Pancreas (tissue), 10 donors: ENCODE measurements at regions of chr17 and their contacts with region 1.

Region 1: GRCh38 chr17:7444682-7445618 is at the start of gene CHRNB1:
- DNase-seq: peak; percentile 80 to 94 (median 88)
- ATAC-seq: peak; percentile 92 to 96 (median 94)
- H3K4me3 ChIP-seq: peak within 1 kb of the TSS; percentile 18 to 63 (median 58)
- H3K27ac ChIP-seq: peak within 1 kb of the TSS; percentile 22 to 64 (median 42)
- H3K4me1 ChIP-seq: peaks cover 0 to 11% (median 0%) of the 10 kb centered on the region in 3 donors
- H3K27me3 ChIP-seq: no peaks in the 10 kb centered on the region
- CTCF ChIP-seq: no peak
- total RNA-seq, gene CHRNB1: 7.5 to 15.0 (median 8.7) TPM

Region 2: GRCh38 chr17:7296189-7296902 is 148.6 kb before region 1 on chr17:
- intact Hi-C with region 1: no loop called
- DNase-seq: peak; percentile 69 to 95 (median 85)
- ATAC-seq: peak; percentile 67 to 86 (median 82)
- H3K4me3 ChIP-seq: peak overlapping the region in 1 of 4 donors; percentile 20
- H3K27ac ChIP-seq: no peak overlapping the region
- H3K4me1 ChIP-seq: peaks cover 0 to 18% (median 13%) of the 10 kb centered on the region in 3 donors
- H3K27me3 ChIP-seq: no peaks in the 10 kb centered on the region
- CTCF ChIP-seq: peak; percentile 84 to 90 (median 88)

Region 3: DNA sequence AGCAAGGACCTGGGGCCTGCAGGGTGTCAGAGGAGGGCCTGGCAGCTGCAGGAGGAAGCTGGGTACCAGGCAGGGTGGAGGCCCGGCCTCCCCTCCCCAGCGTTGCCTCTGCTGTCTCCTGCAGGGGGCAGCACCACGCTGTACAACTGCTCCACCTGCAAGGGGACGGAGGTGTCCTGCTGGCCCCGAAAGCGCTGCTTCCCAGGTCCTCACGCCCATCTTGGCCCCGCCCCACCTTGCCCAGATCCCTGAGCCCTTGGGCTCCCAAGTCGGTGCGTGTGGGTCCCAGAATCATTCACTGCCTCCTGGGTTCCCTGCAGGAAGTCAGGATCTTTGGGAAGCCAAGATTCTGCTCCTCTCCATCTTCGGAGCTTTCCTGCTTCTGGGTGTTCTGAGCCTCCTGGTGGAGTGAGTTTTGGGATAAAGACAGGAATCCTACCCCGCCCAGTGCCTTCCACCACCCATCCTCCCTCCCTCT is 88.8 kb before region 1 on chr17:
- intact Hi-C with region 1: no loop called
- DNase-seq: peak; percentile 75 to 93 (median 88)
- ATAC-seq: peak; percentile 21 to 61 (median 54)
- H3K4me3 ChIP-seq: no peak overlapping the region
- H3K27ac ChIP-seq: no peak overlapping the region
- H3K4me1 ChIP-seq: peaks cover 0 to 12% (median 8%) of the 10 kb centered on the region in 3 donors
- H3K27me3 ChIP-seq: no peaks in the 10 kb centered on the region
- CTCF ChIP-seq: peak; percentile 62 to 88 (median 80)

Region 4: DNA sequence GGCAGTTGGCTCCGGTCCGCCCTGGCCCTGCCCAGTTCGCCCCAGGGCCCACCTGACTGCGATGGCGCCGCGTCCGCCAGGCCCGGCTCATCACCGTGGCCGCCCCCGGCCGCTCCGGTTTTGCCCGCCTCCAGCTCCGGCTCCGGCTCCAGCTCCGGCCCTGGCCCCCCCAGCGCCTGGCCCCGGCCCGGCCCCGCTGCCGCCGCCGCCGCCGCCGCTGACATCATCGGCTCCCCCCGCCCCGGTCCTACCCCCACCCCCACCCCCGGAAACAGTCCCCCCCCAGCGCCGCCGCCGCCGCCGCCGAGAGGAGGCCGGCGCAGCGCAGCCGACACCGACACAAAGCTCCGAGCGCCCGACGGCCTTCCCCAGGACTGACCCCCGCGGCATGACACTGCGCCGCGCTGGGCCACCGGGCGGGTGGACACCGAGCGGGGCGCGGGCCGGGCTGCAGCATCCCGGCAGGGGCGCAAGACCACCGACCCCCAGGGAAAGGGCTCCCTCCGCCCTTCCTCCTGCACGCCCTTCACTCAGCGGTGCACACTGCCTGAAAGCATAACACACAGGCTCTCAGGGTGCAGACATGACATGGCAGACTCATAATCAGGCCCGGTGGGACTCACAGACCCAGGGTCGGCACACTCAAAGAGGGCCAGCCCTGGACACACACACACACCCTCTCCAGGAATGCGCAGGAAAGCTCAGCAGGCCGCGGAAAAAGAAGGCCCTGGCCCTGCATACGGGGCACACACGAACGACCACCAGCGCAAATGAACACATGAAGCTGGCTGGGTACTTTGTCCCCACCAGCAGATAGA is 34.7 kb after region 1 on chr17 and contains the start of gene ZBTB4:
- intact Hi-C with region 1: loop called in 2 of 3 experiments (anchors 5 kb)
- DNase-seq: peak in 5 of 6 donors; percentile 51 to 86 (median 80)
- ATAC-seq: peak in 3 of 4 donors; percentile 2 to 25 (median 16)
- H3K4me3 ChIP-seq: peak within 1 kb of the TSS; percentile 89 to 98 (median 98)
- H3K27ac ChIP-seq: peak within 1 kb of the TSS; percentile 98 to 99 (median 98)
- H3K4me1 ChIP-seq: peaks cover 0 to 17% (median 16%) of the 10 kb centered on the region in 3 donors
- H3K27me3 ChIP-seq: no peaks in the 10 kb centered on the region
- CTCF ChIP-seq: no peak
- total RNA-seq, gene ZBTB4: 20.3 to 30.2 (median 22.2) TPM

Region 5: DNA sequence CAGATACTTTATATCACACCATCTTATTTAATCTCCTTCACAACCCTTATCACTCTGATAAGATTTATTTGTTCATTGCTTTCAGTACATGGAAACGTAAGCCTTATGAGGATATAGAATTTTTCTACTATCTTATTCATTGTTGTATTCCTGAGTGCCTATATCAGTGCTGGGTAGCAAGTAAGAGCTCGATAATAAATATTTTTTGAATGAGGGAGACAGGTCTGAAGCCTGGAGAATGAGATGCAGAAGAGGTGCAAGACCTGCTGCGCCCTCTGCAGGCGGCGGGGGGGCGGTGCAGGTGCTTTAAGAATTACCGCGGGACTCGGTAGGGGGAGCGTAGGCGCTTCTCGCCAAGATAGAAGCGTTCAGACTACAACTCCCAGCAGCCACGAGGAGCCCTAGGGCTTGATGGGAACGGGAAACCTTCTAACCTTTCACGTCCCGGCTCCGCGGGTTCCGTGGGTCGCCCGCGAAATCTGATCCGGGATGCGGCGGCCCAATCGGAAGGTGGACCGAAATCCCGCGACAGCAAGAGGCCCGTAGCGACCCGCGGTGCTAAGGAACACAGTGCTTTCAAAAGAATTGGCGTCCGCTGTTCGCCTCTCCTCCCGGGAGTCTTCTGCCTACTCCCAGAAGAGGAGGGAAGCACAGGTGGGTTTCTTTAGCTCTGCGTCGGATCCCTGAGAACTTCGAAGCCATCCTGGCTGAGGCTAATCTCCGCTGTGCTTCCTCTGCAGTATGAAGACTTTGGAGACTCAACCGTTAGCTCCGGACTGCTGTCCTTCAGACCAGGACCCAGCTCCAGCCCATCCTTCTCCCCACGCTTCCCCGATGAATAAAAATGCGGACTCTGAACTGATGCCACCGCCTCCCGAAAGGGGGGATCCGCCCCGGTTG is 243.2 kb after region 1 on chr17 and contains the start of gene WRAP53:
- intact Hi-C with region 1: no loop called
- DNase-seq: peak; percentile 95 to 98 (median 97)
- ATAC-seq: peak; percentile 82 to 89 (median 86)
- H3K4me3 ChIP-seq: peak within 1 kb of the TSS; percentile 45 to 91 (median 64)
- H3K27ac ChIP-seq: peak within 1 kb of the TSS; percentile 93 to 98 (median 97)
- H3K4me1 ChIP-seq: peaks cover 3 to 25% (median 19%) of the 10 kb centered on the region in 3 donors
- H3K27me3 ChIP-seq: no peaks in the 10 kb centered on the region
- CTCF ChIP-seq: peak; percentile 92 to 99 (median 98)
- total RNA-seq, gene WRAP53: 2.0 to 5.0 (median 3.8) TPM